Spleen (tissue), 13 donors: ENCODE measurements at regions of chr6 and their contacts with region 1.

Region 1: GRCh38 chr6:36027501-36028087 is at the start of gene MAPK14:
- DNase-seq: peak; percentile 99
- H3K4me3 ChIP-seq: peak within 1 kb of the TSS; percentile 81 to 100 (median 96)
- H3K27ac ChIP-seq: peak within 1 kb of the TSS; percentile 87 to 99 (median 94)
- H3K4me1 ChIP-seq: peaks cover 19 to 78% (median 48%) of the 10 kb centered on the region in 6 donors
- H3K27me3 ChIP-seq: peaks cover 0 to 19% (median 5%) of the 10 kb centered on the region in 7 donors
- CTCF ChIP-seq: peak; percentile 87 to 99 (median 93)
- POLR2A ChIP-seq: peak in 2 of 3 donors; percentile 44 to 92
- total RNA-seq, gene MAPK14: 82.2 to 242 (median 119) TPM

Region 2: GRCh38 chr6:35948725-35949124 is 78.9 kb before region 1 on chr6:
- intact Hi-C with region 1: no loop called
- DNase-seq: no peak
- H3K4me3 ChIP-seq: no peak overlapping the region
- H3K27ac ChIP-seq: no peak overlapping the region
- H3K4me1 ChIP-seq: no peaks in the 10 kb centered on the region
- H3K27me3 ChIP-seq: no peaks in the 10 kb centered on the region
- CTCF ChIP-seq: no peak
- POLR2A ChIP-seq: no peak

Region 3: GRCh38 chr6:36094753-36095496 is 67.3 kb after region 1 on chr6:
- intact Hi-C with region 1: loop called (anchors 5 kb)
- DNase-seq: peak; percentile 94
- H3K4me3 ChIP-seq: peak overlapping the region in 1 of 8 donors; percentile 12
- H3K27ac ChIP-seq: peak overlapping the region in 6 of 8 donors; percentile 1 to 59 (median 33)
- H3K4me1 ChIP-seq: peaks cover 4 to 38% (median 27%) of the 10 kb centered on the region in 6 donors
- H3K27me3 ChIP-seq: no peaks in the 10 kb centered on the region
- CTCF ChIP-seq: peak; percentile 79 to 98 (median 95)
- POLR2A ChIP-seq: no peak

Region 4: DNA sequence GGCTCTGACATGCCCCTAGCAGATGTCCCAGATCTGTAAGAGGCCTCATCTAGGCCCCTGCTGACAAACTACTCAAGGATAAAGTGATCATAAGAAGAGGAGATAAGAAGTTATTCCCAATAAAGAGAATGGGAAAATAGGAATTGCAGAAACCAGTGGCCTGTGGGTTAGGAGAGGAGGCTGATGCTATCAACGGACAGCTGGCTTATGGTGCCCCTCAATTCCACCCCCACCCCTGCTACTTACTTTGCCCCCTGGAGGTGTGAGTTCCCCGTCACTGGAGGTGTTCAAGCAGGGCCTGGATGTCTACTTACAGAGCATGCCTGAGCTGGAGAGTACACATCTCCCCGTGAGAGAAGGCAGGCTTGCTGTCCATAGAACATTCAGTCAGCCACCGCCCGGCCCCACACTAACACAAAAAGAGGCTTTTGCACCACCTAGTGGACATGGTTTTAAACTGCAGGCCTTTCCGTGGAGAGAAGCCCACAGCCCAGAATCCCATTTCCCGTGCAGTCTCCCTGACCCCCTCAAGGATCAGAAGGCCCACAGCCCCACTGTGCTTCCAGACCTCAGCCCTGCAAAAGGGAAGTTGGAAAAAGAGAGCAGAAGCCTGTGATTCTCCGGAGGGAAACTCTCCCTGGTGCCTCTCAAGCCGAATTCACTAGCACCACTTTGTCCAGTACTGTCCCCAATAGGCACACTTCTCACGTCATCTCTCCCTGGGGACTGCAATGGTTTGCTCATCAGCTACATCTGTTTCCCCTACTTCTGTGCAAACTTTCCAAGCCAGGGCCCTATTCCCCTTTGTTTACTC is 332.9 kb after region 1 on chr6:
- intact Hi-C with region 1: loop called (anchors 10 kb)
- DNase-seq: peak; percentile 91
- H3K4me3 ChIP-seq: no peak overlapping the region
- H3K27ac ChIP-seq: no peak overlapping the region
- H3K4me1 ChIP-seq: peaks cover 0 to 51% (median 30%) of the 10 kb centered on the region in 6 donors
- H3K27me3 ChIP-seq: peaks cover 0 to 14% (median 0%) of the 10 kb centered on the region in 7 donors
- CTCF ChIP-seq: peak; percentile 74 to 90 (median 85)
- POLR2A ChIP-seq: no peak